Naive thymus-derived CD4-positive, alpha-beta T cell (primary cell): ENCODE measurements at regions of chr7 and their contacts with region 1.

Region 1: DNA sequence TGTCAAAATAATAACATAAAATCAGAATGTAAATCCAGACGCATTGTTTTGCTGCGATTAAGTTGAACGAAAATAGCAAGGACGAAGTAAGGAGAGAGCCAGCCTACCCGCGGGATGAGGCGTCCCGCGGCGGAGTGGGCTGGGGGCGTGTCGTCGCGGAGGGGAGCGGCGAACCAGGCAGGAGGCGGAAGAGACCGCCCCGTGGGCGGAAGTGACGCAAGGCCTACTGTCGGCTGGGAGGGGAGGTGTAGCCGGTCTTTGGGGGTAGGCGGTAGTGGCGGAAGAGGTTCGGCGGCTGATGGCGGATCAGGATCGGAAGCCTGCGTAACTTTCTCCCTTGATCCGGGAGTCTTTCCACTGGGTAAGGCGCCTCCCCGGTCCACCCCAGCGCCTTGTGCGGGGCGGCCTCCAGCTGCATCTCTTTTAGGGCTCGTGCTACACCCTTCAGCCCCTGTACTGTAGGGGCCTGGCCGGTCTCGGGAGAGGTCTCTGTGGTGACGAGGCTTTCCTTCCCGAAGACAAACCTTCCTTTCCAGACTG is at the start of gene TAX1BP1:
- DNase-seq: peak; percentile 92 to 97 (median 95)
- ATAC-seq: peak; percentile 97
- H3K4me3 ChIP-seq: peak within 1 kb of the TSS; percentile 91
- H3K4me3 Mint-ChIP-seq: peak within 1 kb of the TSS; percentile 81 to 99 (median 97)
- H3K27ac ChIP-seq: peak within 1 kb of the TSS; percentile 87
- H3K27ac Mint-ChIP-seq: peak within 1 kb of the TSS; percentile 76 to 99 (median 93)
- H3K4me1 ChIP-seq: peaks cover 6 to 24% of the 10 kb centered on the region in 2 donors
- H3K4me1 Mint-ChIP-seq: peaks cover 27 to 51% (median 44%) of the 10 kb centered on the region in 7 donors
- H3K27me3 ChIP-seq: no peaks in the 10 kb centered on the region
- H3K27me3 Mint-ChIP-seq: peaks cover 0 to 9% (median 0%) of the 10 kb centered on the region in 5 donors
- total RNA-seq, gene TAX1BP1: 69.4 to 111 (median 108) TPM

Region 2: GRCh38 chr7:25951031-25951948 is 1788.7 kb before region 1 on chr7:
- CTCF ChIA-PET with region 1: no interaction called
- POLR2A ChIA-PET with region 1: no interaction called
- intact Hi-C with region 1: loop called in 1 of 2 experiments (anchors 1 kb)
- DNase-seq: peak; percentile 70 to 94 (median 87)
- ATAC-seq: peak; percentile 99
- H3K4me3 ChIP-seq: peak overlapping the region; percentile 61
- H3K4me3 Mint-ChIP-seq: peak overlapping the region; percentile 87 to 94 (median 92)
- H3K27ac ChIP-seq: peak overlapping the region; percentile 52
- H3K27ac Mint-ChIP-seq: peak overlapping the region in 7 of 9 donors; percentile 45 to 87 (median 81)
- H3K4me1 ChIP-seq: peaks cover 7 to 14% of the 10 kb centered on the region in 2 donors
- H3K4me1 Mint-ChIP-seq: peaks cover 16 to 31% (median 20%) of the 10 kb centered on the region in 7 donors
- H3K27me3 ChIP-seq: no peaks in the 10 kb centered on the region
- H3K27me3 Mint-ChIP-seq: peaks cover 0 to 22% (median 5%) of the 10 kb centered on the region in 5 donors

Region 3: GRCh38 chr7:26291699-26292538 is 1448.1 kb before region 1 on chr7 and contains the start of gene SNX10:
- CTCF ChIA-PET with region 1: no interaction called
- POLR2A ChIA-PET with region 1: no interaction called
- intact Hi-C with region 1: loop called (anchors 2 to 5 kb)
- DNase-seq: peak; percentile 52 to 74 (median 72)
- ATAC-seq: peak; percentile 90
- H3K4me3 ChIP-seq: peak within 1 kb of the TSS; percentile 88
- H3K4me3 Mint-ChIP-seq: peak within 1 kb of the TSS; percentile 78 to 94 (median 91)
- H3K27ac ChIP-seq: peak within 1 kb of the TSS; percentile 58
- H3K27ac Mint-ChIP-seq: peak within 1 kb of the TSS; percentile 45 to 91 (median 82)
- H3K4me1 ChIP-seq: peaks cover 25 to 30% of the 10 kb centered on the region in 2 donors
- H3K4me1 Mint-ChIP-seq: peaks cover 22 to 41% (median 35%) of the 10 kb centered on the region in 7 donors
- H3K27me3 ChIP-seq: no peaks in the 10 kb centered on the region
- H3K27me3 Mint-ChIP-seq: peaks cover 0 to 13% (median 0%) of the 10 kb centered on the region in 5 donors
- total RNA-seq, gene SNX10: 5.0 to 37.0 (median 6.3) TPM

Region 4: DNA sequence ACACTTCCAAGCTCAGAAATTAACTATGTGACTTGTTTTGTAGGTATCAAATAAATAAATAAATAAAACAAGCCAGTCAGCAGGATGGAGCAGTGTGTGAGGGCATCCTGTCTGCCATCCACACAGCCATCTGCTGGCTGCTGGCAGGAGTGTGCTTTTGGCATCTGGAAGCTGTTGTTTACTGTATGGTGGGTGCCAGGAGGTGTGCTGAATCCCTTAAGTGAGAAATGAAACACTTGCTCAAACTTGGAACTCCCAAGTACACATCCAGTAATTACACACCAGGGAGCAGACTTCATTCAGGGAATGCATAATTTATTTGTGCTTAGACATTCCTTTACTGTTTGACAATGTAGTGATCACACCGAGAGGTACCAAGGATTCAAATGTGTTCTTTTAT is 16.9 kb before region 1 on chr7:
- CTCF ChIA-PET with region 1: no interaction called
- POLR2A ChIA-PET with region 1: no interaction called
- intact Hi-C with region 1: no loop called
- DNase-seq: no peak
- ATAC-seq: no peak
- H3K4me3 ChIP-seq: no peak overlapping the region
- H3K4me3 Mint-ChIP-seq: no peak overlapping the region
- H3K27ac ChIP-seq: no peak overlapping the region
- H3K27ac Mint-ChIP-seq: no peak overlapping the region
- H3K4me1 ChIP-seq: no peaks in the 10 kb centered on the region
- H3K4me1 Mint-ChIP-seq: peaks cover 0 to 4% (median 0%) of the 10 kb centered on the region in 7 donors
- H3K27me3 ChIP-seq: no peaks in the 10 kb centered on the region
- H3K27me3 Mint-ChIP-seq: peaks cover 0 to 10% (median 0%) of the 10 kb centered on the region in 5 donors

Region 5: GRCh38 chr7:27901028-27901760 is 161.2 kb after region 1 on chr7:
- CTCF ChIA-PET with region 1: no interaction called
- POLR2A ChIA-PET with region 1: no interaction called
- intact Hi-C with region 1: loop called in 1 of 2 experiments (anchors 1 kb)
- DNase-seq: peak in 4 of 9 donors; percentile 7 to 50 (median 29)
- ATAC-seq: peak; percentile 83
- H3K4me3 ChIP-seq: peak overlapping the region; percentile 14
- H3K4me3 Mint-ChIP-seq: peak overlapping the region; percentile 26 to 75 (median 66)
- H3K27ac ChIP-seq: no peak overlapping the region
- H3K27ac Mint-ChIP-seq: peak overlapping the region; percentile 56 to 85 (median 61)
- H3K4me1 ChIP-seq: peaks cover 5 to 8% of the 10 kb centered on the region in 2 donors
- H3K4me1 Mint-ChIP-seq: peaks cover 26 to 57% (median 33%) of the 10 kb centered on the region in 7 donors
- H3K27me3 ChIP-seq: no peaks in the 10 kb centered on the region
- H3K27me3 Mint-ChIP-seq: peaks cover 0 to 7% (median 0%) of the 10 kb centered on the region in 5 donors

Region 6: DNA sequence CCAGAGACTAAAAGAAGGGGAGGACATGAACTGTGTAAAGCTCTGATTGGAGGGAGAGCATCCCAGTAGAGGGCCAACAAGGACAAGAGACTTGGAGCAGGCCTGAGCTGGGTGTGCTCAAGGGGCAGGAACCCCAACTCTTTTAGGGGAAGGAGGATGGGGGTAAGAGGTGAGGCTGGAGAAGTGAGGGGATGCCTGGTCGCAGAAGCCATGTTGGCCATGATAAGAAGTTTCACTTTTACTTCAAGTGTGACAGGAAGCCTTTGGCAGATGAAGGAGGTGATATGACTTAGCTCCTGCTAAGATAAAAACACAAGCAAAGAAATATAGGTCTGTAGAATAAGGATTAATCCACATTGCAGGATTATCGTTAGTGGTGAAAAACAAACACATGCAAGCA is 232.3 kb after region 1 on chr7:
- CTCF ChIA-PET with region 1: no interaction called
- POLR2A ChIA-PET with region 1: interaction called, 10 read pairs
- intact Hi-C with region 1: loop called in 1 of 2 experiments (anchors 5 kb)
- DNase-seq: peak in 6 of 9 donors; percentile 23 to 54 (median 44)
- ATAC-seq: peak; percentile 72
- H3K4me3 ChIP-seq: peak overlapping the region; percentile 44
- H3K4me3 Mint-ChIP-seq: peak overlapping the region; percentile 72 to 89 (median 82)
- H3K27ac ChIP-seq: peak overlapping the region; percentile 2
- H3K27ac Mint-ChIP-seq: peak overlapping the region; percentile 44 to 92 (median 88)
- H3K4me1 ChIP-seq: peaks cover 0 to 16% of the 10 kb centered on the region in 2 donors
- H3K4me1 Mint-ChIP-seq: peaks cover 24 to 39% (median 35%) of the 10 kb centered on the region in 7 donors
- H3K27me3 ChIP-seq: no peaks in the 10 kb centered on the region
- H3K27me3 Mint-ChIP-seq: peaks cover 0 to 4% (median 0%) of the 10 kb centered on the region in 5 donors

Region 7: GRCh38 chr7:28179120-28180030 is 439.4 kb after region 1 on chr7:
- CTCF ChIA-PET with region 1: no interaction called
- POLR2A ChIA-PET with region 1: interaction called, 3 read pairs
- intact Hi-C with region 1: loop called (anchors 1 to 10 kb)
- DNase-seq: peak; percentile 57 to 72 (median 71)
- ATAC-seq: peak; percentile 85
- H3K4me3 ChIP-seq: peak overlapping the region; percentile 51
- H3K4me3 Mint-ChIP-seq: peak overlapping the region; percentile 55 to 95 (median 72)
- H3K27ac ChIP-seq: peak overlapping the region; percentile 48
- H3K27ac Mint-ChIP-seq: peak overlapping the region in 8 of 9 donors; percentile 33 to 85 (median 61)
- H3K4me1 ChIP-seq: peaks cover 5 to 11% of the 10 kb centered on the region in 2 donors
- H3K4me1 Mint-ChIP-seq: peaks cover 11 to 50% (median 24%) of the 10 kb centered on the region in 7 donors
- H3K27me3 ChIP-seq: no peaks in the 10 kb centered on the region
- H3K27me3 Mint-ChIP-seq: peaks cover 0 to 43% (median 0%) of the 10 kb centered on the region in 5 donors

Region 8: GRCh38 chr7:28329661-28330363 is 589.8 kb after region 1 on chr7:
- CTCF ChIA-PET with region 1: no interaction called
- POLR2A ChIA-PET with region 1: no interaction called
- intact Hi-C with region 1: loop called in 1 of 2 experiments (anchors 5 kb)
- DNase-seq: peak in 7 of 9 donors; percentile 22 to 56 (median 42)
- ATAC-seq: peak; percentile 69
- H3K4me3 ChIP-seq: peak overlapping the region; percentile 15
- H3K4me3 Mint-ChIP-seq: peak overlapping the region; percentile 39 to 90 (median 82)
- H3K27ac ChIP-seq: peak overlapping the region; percentile 55
- H3K27ac Mint-ChIP-seq: peak overlapping the region; percentile 67 to 96 (median 91)
- H3K4me1 ChIP-seq: peaks cover 0 to 36% of the 10 kb centered on the region in 2 donors
- H3K4me1 Mint-ChIP-seq: peaks cover 18 to 47% (median 43%) of the 10 kb centered on the region in 7 donors
- H3K27me3 ChIP-seq: no peaks in the 10 kb centered on the region
- H3K27me3 Mint-ChIP-seq: peaks cover 0 to 4% (median 0%) of the 10 kb centered on the region in 5 donors